ENCODE measurements at regions of chr1 and their contacts with region 1.

Region 1: GRCh38 chr1:234722904-234723720 is 113.1 kb upstream of the IRF2BP2 start:
- DNase-seq: no peak
- ATAC-seq: no peak
- H3K4me3 ChIP-seq: no peak overlapping the region
- H3K27ac ChIP-seq: peak overlapping the region; percentile 94
- H3K4me1 ChIP-seq: peaks cover 49% of the 10 kb centered on the region
- H3K27me3 ChIP-seq: no peaks in the 10 kb centered on the region
- CTCF ChIP-seq: no peak
- EP300 ChIP-seq: no peak
- POLR2A ChIP-seq: no peak
- RAD21 ChIP-seq: no peak

Region 2: DNA sequence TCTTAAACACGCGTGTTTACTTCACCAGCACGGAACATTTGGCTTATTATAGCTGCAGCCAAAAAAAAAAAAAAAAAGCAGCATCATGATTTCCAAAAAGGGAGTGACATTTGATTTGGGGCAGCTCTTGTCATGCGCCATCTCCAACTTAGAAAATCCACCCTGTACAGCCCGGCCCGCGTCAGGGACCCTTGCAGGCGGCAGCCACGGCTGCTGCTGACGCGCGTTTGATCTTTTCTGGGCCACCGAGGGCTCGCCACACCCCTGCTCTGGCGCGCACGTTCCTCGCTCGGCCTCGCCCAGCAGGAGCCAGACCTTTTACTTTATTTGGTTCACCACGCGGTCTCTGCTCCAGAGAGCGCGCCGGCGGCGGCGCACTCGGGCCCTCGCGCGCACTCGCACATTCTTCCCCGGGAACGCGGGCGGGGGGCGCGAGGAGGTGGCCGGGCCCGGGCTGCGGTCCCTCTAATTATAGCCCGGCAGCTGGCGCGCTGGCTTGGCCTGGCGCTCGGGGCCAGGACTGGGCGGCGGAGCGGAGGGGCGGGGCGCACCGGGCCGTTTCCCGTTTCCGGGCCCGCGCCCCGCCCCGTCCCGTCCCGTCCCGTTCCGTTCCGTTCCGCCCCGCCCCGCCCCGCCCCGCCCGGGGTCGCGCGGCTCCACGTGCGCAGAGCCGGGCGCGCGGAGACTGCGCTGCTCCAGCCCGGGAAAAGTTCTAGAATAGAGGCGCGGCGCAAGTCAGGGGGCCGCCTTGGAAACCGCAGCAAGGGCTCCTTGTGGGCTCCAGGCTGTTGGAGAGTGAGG is 123.3 kb before region 1 on chr1:
- CTCF ChIA-PET with region 1: interaction called, 10 read pairs
- POLR2A ChIA-PET with region 1: interaction called, 15 read pairs
- RAD21 ChIA-PET with region 1: interaction called, 28 read pairs
- SMC1A ChIA-PET with region 1: interaction called, 18 read pairs
- in situ Hi-C with region 1: no loop called
- intact Hi-C with region 1: no loop called
- DNase-seq: no peak
- ATAC-seq: peak; percentile 76
- H3K4me3 ChIP-seq: peak overlapping the region; percentile 67; the same call in 1 of the 2 replicates
- H3K27ac ChIP-seq: peak overlapping the region; percentile 75
- H3K4me1 ChIP-seq: peaks cover 22% of the 10 kb centered on the region
- H3K27me3 ChIP-seq: no peaks in the 10 kb centered on the region
- CTCF ChIP-seq: 0 out of 6 replicates have a peak, but pooled peaks of 1 of the 3 experiments have one; percentile 5
- EP300 ChIP-seq: 0 out of 4 replicates have a peak, but pooled peaks of 1 of the 2 experiments have one; percentile 42
- POLR2A ChIP-seq: peak; percentile 70; the same call in 1 of the 2 replicates
- RAD21 ChIP-seq: no peak

Region 3: GRCh38 chr1:234699795-234700665 is 23.1 kb before region 1 on chr1:
- CTCF ChIA-PET with region 1: interaction called, 15 read pairs
- POLR2A ChIA-PET with region 1: interaction called, 12 read pairs
- RAD21 ChIA-PET with region 1: interaction called, 98 read pairs
- SMC1A ChIA-PET with region 1: interaction called, 255 read pairs
- in situ Hi-C with region 1: no loop called
- intact Hi-C with region 1: no loop called
- DNase-seq: peak; percentile 83
- ATAC-seq: peak; percentile 89
- H3K4me3 ChIP-seq: no peak overlapping the region
- H3K27ac ChIP-seq: peak overlapping the region; percentile 43
- H3K4me1 ChIP-seq: peaks cover 32% of the 10 kb centered on the region
- H3K27me3 ChIP-seq: no peaks in the 10 kb centered on the region
- CTCF ChIP-seq: no peak
- EP300 ChIP-seq: peak; percentile 95 to 96
- POLR2A ChIP-seq: 0 out of 2 replicates have a peak, but pooled peaks have one; percentile 23
- RAD21 ChIP-seq: 0 out of 2 replicates have a peak, but pooled peaks have one; percentile 28

Region 4: GRCh38 chr1:234737967-234738314 is 14.8 kb after region 1 on chr1:
- CTCF ChIA-PET with region 1: interaction called, 4 read pairs
- POLR2A ChIA-PET with region 1: interaction called, 5 read pairs
- RAD21 ChIA-PET with region 1: no interaction called
- SMC1A ChIA-PET with region 1: interaction called, 11 read pairs
- in situ Hi-C with region 1: no loop called
- intact Hi-C with region 1: no loop called
- DNase-seq: no peak
- ATAC-seq: no peak
- H3K4me3 ChIP-seq: no peak overlapping the region
- H3K27ac ChIP-seq: no peak overlapping the region
- H3K4me1 ChIP-seq: no peaks in the 10 kb centered on the region
- H3K27me3 ChIP-seq: no peaks in the 10 kb centered on the region
- CTCF ChIP-seq: no peak
- EP300 ChIP-seq: no peak
- POLR2A ChIP-seq: no peak
- RAD21 ChIP-seq: no peak

Region 5: DNA sequence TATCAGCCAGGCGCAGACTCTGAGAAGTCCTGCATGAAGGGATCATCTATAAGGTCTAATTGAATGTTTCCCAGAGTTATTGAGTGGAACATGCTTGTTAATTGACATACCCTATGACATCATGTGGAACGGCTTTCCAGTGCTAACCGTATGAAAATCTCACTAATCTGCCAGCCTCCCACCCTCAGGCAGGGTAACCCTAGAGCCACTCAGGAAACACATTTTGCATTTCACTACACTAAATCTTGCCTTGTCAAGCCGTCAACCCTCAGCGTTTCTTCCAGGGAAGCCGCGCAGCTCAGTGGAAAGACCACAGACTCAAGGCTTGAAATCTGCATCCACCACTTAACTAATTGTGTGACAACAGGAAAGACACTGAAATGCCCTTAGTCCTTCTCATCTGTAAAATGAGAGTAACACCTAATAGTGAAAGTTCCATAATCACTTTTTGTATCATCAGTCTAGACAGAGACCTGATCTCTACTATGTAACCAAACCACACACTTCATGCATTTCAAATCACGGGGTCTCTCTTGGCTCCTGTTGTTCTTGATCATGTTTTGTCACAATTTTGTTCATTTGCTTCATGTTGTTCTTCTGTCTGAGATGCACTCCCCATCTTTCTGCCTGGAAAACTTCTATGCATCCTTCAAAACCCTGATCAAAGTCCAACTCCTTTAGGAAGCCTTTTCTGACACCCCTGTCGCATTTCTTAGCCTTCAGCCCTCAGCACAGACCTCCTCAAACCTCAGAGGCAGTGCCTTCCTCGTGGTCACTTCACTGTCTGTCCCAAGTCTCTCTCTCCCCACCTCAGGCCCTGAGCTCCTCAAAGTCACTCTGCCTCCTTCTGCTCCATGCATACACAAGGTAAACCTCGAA is 159.0 kb after region 1 on chr1:
- CTCF ChIA-PET with region 1: no interaction called
- POLR2A ChIA-PET with region 1: interaction called, 13 read pairs
- RAD21 ChIA-PET with region 1: interaction called, 6 read pairs
- SMC1A ChIA-PET with region 1: interaction called, 5 read pairs
- in situ Hi-C with region 1: no loop called
- intact Hi-C with region 1: no loop called
- DNase-seq: peak; percentile 83
- ATAC-seq: peak; percentile 88
- H3K4me3 ChIP-seq: peak overlapping the region; percentile 53
- H3K27ac ChIP-seq: peak overlapping the region; percentile 73
- H3K4me1 ChIP-seq: peaks cover 50% of the 10 kb centered on the region
- H3K27me3 ChIP-seq: no peaks in the 10 kb centered on the region
- CTCF ChIP-seq: no peak
- EP300 ChIP-seq: peak; percentile 90 to 94
- POLR2A ChIP-seq: no peak
- RAD21 ChIP-seq: no peak

Region 6: GRCh38 chr1:235910357-235911299 is 1187.5 kb after region 1 on chr1:
- CTCF ChIA-PET with region 1: no interaction called
- POLR2A ChIA-PET with region 1: no interaction called
- RAD21 ChIA-PET with region 1: no interaction called
- SMC1A ChIA-PET with region 1: no interaction called
- in situ Hi-C with region 1: no loop called
- intact Hi-C with region 1: no loop called
- DNase-seq: no peak
- ATAC-seq: peak; percentile 78
- H3K4me3 ChIP-seq: no peak overlapping the region
- H3K27ac ChIP-seq: no peak overlapping the region
- H3K4me1 ChIP-seq: peaks cover 4% of the 10 kb centered on the region; the same call in 1 of the 2 replicates
- H3K27me3 ChIP-seq: no peaks in the 10 kb centered on the region
- CTCF ChIP-seq: no peak
- EP300 ChIP-seq: no peak; a peak in 1 of 4 replicates
- POLR2A ChIP-seq: no peak
- RAD21 ChIP-seq: no peak